ENCODE measurements at regions of chr17 and their contacts with region 1.

Region 1: DNA sequence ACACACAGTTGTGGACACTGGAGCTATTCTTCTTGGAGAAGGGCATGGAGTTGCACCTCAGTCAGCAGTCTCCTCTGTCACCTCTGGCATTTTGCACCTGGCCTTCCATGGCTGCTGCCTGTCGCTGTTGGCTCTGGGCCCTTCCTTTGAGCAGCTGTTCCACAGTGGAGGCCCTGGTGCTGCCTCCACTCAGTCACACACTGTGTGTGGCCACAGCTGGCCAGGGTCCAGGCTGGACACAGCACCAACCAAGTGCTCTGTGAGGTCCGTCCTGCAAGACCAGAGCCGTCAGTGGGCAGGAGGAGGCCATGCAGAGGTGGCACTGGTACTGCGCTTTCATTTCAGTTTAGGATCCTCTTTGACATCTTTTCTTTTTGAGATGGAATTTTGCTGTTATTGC is 21.6 kb upstream of the MED9 start:
- DNase-seq: no peak
- H3K4me3 ChIP-seq: no peak overlapping the region
- H3K4me1 ChIP-seq: no peaks in the 10 kb centered on the region
- H3K27me3 ChIP-seq: no peaks in the 10 kb centered on the region; the same call in 1 of the 2 replicates

Region 2: DNA sequence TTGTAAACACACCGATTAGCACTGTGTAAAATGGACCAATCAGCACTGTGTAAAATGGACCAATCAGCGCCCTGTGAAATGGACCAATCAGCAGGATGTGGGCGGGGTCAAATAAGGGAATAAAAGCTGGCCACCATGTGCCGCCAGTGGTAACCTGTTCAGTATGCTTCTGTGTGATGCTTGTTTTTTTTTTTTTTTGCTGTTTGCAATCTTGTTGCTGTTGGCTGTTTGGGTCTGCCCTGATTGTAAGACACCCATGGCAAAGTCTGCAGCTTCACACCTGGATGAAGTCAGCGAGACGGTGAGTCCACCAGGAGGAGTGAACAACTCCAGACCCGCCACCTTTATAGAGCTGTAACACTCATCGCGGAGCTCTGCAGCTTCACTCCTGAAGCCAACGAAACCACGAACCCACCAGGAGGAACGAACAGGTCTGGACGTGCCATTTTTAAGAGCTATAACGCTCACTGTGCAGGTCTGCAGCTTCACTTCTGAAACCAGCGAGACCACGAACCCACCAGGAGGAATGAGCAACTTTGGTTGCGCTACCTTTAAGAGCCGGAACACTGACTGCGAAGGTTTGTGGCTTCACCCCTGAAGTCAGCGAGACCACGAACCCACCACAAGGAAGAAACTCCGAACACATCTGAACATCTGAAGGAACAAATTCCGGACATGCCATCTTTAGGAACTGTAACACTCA is 63.4 kb before region 1 on chr17:
- in situ Hi-C with region 1: loop called (anchors 10 kb)
- DNase-seq: peak in 1 of 2 experiments; percentile 32
- H3K4me3 ChIP-seq: no peak overlapping the region
- H3K4me1 ChIP-seq: no peaks in the 10 kb centered on the region
- H3K27me3 ChIP-seq: no peaks in the 10 kb centered on the region

Region 3: DNA sequence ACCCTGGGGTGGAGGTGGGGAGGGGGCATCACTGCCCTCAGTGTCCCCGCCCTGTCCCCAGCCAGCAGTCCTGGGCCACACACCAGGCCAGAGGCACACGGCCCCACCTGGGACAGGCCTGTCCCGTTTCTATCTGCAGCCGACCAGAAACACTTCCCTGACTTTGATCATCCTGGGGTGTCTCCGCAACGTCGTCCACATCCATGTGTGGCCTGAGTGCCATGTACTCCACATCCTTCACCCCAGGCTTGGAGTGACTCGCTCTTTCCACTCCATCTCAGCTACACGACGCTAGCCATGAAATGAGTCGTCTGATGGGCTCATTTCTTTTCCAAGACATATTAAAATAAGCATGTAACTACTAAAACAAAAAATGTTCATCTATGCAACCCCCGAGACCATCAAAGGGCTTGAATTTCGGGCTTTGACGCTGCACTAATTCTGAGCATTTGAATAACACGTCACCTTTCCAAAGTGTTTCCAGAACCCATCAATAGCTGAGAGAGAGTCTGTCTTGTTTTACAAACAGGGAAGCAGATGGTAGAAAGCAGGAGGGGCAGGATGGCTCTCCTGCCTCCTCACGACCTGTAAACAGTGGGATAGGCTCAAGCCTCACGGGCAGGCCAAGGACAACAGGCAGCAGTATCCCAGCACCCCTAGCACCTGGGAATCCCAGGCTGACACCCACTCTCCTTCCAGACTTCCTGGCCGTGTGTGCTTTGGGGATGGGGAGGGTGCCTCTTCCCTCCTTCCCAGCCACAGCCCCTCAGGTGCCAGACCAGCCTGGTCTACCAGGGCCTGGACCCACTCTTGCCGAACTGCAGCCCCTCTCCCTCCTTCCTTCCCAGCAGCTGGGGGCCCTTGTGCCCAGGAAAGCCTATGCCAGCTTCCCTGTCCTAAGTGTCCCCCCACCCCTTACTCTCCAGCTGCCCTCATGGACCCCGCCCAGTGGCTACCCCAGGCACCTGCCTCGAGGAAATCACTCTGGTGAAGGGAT is 61.1 kb after region 1 on chr17:
- in situ Hi-C with region 1: no loop called
- DNase-seq: no peak
- H3K4me3 ChIP-seq: no peak overlapping the region
- H3K4me1 ChIP-seq: no peaks in the 10 kb centered on the region
- H3K27me3 ChIP-seq: no peaks in the 10 kb centered on the region